ENCODE measurements at regions of chr11 and their contacts with region 1.

Region 1: GRCh38 chr11:85752890-85753581 is 57.9 kb downstream of the SYTL2 start:
- DNase-seq: peak; percentile 94
- H3K4me3 Mint-ChIP-seq: peak overlapping the region; percentile 57
- H3K27ac Mint-ChIP-seq: peak overlapping the region; percentile 97
- H3K4me1 Mint-ChIP-seq: peaks cover 95% of the 10 kb centered on the region
- H3K27me3 Mint-ChIP-seq: no peaks in the 10 kb centered on the region

Region 2: GRCh38 chr11:85394283-85394682 is 358.8 kb before region 1 on chr11:
- CTCF ChIA-PET with region 1: no interaction called
- intact Hi-C with region 1: no loop called
- DNase-seq: no peak
- H3K4me3 Mint-ChIP-seq: no peak overlapping the region
- H3K27ac Mint-ChIP-seq: no peak overlapping the region
- H3K4me1 Mint-ChIP-seq: no peaks in the 10 kb centered on the region
- H3K27me3 Mint-ChIP-seq: no peaks in the 10 kb centered on the region

Region 3: DNA sequence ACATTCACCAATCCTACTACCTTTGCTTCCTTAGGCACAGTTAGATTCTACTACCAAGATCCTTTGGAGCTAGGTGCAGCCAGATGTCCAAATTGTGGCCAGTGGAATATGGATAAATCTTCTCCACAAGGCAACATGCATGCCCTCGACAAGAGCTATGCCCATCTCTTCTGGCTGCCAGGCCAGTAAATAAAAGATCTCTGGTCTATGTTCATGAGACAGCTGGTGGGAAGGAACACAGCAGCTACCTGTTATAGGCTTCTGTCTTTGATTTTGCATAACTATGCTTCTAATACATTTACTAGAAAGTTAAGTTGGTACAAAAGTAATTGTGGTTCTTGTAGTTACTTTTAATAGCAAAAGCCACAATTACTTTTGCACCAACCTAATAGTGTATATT is 308.6 kb before region 1 on chr11:
- CTCF ChIA-PET with region 1: no interaction called
- intact Hi-C with region 1: no loop called
- DNase-seq: no peak
- H3K4me3 Mint-ChIP-seq: no peak overlapping the region
- H3K27ac Mint-ChIP-seq: no peak overlapping the region
- H3K4me1 Mint-ChIP-seq: no peaks in the 10 kb centered on the region
- H3K27me3 Mint-ChIP-seq: no peaks in the 10 kb centered on the region

Region 4: GRCh38 chr11:85627998-85628770 is 124.9 kb before region 1 on chr11 and contains the start of gene TMEM126B:
- CTCF ChIA-PET with region 1: no interaction called
- intact Hi-C with region 1: loop called (anchors 1 kb)
- DNase-seq: peak; percentile 98
- H3K4me3 Mint-ChIP-seq: peak within 1 kb of the TSS; percentile 99
- H3K27ac Mint-ChIP-seq: peak within 1 kb of the TSS; percentile 96
- H3K4me1 Mint-ChIP-seq: peaks cover 33% of the 10 kb centered on the region
- H3K27me3 Mint-ChIP-seq: no peaks in the 10 kb centered on the region
- total RNA-seq, gene TMEM126B: 72.6 to 79.0 TPM

Region 5: GRCh38 chr11:85718991-85719807 is 33.8 kb before region 1 on chr11:
- CTCF ChIA-PET with region 1: no interaction called
- intact Hi-C with region 1: loop called (anchors 2 kb)
- DNase-seq: no peak
- H3K4me3 Mint-ChIP-seq: no peak overlapping the region
- H3K27ac Mint-ChIP-seq: no peak overlapping the region
- H3K4me1 Mint-ChIP-seq: peaks cover 8% of the 10 kb centered on the region
- H3K27me3 Mint-ChIP-seq: no peaks in the 10 kb centered on the region

Region 6: DNA sequence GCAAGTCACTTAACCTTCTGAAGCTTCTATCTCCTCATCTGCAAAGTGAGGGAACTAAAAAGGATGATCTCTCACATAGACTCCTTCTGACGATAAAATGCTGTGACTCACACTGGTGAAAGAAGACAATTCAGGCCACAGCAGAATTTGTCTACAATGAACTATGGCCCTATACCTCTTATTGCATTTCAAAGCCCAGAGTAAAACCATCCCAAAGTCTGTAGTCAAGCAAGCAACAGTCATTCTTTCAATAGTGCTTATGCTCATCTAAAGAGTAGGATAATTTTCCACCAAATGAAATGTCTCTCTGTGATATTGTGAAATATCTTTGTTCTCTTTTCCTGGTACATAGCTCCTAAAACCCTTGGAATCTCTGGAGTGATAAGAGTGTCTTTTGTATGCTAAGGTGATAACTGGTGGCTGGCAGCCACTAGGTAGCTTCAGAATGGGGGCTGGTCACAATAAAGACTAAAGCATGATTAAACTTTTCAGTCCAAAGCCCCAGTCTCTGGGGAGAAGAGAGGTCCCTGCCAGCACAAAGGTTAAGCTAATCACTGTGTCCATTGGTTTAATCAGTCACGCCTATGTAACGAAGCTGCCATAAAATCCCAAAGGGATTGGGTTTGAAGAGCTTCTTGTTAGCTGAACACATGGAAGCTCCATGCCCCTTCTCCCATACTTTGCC is 27.1 kb after region 1 on chr11:
- CTCF ChIA-PET with region 1: no interaction called
- intact Hi-C with region 1: loop called (anchors 1 kb)
- DNase-seq: no peak
- H3K4me3 Mint-ChIP-seq: no peak overlapping the region
- H3K27ac Mint-ChIP-seq: no peak overlapping the region
- H3K4me1 Mint-ChIP-seq: peaks cover 25% of the 10 kb centered on the region
- H3K27me3 Mint-ChIP-seq: no peaks in the 10 kb centered on the region

Region 7: GRCh38 chr11:85815186-85815931 is 62.3 kb after region 1 on chr11:
- CTCF ChIA-PET with region 1: no interaction called
- intact Hi-C with region 1: no loop called
- DNase-seq: no peak
- H3K4me3 Mint-ChIP-seq: no peak overlapping the region
- H3K27ac Mint-ChIP-seq: no peak overlapping the region
- H3K4me1 Mint-ChIP-seq: peaks cover 8% of the 10 kb centered on the region
- H3K27me3 Mint-ChIP-seq: no peaks in the 10 kb centered on the region

Region 8: DNA sequence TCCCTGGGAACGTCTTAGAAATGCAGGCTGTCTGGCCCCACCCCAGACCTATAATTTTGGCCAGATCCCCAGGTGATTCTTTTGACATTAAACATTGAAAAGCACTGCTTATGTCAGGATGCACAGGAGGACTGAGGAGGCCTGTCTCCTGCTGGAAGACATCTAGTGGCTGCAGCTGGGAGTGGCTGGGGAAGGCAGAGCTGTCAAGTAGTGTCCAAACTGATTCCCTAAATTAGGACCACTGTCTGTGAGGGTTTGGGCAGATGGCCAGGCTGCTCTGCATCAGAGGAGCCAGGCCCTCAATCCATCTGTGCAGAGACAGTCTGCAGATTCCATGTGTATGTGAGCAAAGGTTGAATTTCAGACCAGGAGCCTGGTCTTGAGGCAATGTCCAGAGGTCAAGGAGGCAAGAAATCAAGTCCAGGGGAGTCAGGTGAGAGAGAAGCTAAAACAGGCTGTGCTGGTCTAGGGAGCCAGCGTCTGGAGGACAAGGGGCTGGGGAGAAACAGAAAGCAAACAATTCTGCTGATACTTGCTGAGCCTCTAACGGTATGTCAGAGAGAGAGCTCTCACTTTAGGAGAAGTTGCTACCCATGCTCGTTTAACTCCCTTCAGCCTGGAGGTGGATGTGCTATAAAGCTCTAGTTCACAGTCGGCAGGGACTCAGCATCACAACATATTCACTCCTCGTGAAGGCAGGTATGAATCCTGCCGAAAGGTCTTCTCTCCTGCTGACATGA is 73.2 kb after region 1 on chr11:
- CTCF ChIA-PET with region 1: no interaction called
- intact Hi-C with region 1: loop called (anchors 1 kb)
- DNase-seq: peak; percentile 51
- H3K4me3 Mint-ChIP-seq: peak overlapping the region; percentile 28
- H3K27ac Mint-ChIP-seq: peak overlapping the region; percentile 20
- H3K4me1 Mint-ChIP-seq: peaks cover 57% of the 10 kb centered on the region
- H3K27me3 Mint-ChIP-seq: no peaks in the 10 kb centered on the region

Region 9: GRCh38 chr11:86193297-86194095 is 440.5 kb after region 1 on chr11:
- CTCF ChIA-PET with region 1: no interaction called
- intact Hi-C with region 1: no loop called
- DNase-seq: peak; percentile 74
- H3K4me3 Mint-ChIP-seq: peak overlapping the region; percentile 52
- H3K27ac Mint-ChIP-seq: peak overlapping the region; percentile 73
- H3K4me1 Mint-ChIP-seq: peaks cover 19% of the 10 kb centered on the region
- H3K27me3 Mint-ChIP-seq: no peaks in the 10 kb centered on the region

Region 10: DNA sequence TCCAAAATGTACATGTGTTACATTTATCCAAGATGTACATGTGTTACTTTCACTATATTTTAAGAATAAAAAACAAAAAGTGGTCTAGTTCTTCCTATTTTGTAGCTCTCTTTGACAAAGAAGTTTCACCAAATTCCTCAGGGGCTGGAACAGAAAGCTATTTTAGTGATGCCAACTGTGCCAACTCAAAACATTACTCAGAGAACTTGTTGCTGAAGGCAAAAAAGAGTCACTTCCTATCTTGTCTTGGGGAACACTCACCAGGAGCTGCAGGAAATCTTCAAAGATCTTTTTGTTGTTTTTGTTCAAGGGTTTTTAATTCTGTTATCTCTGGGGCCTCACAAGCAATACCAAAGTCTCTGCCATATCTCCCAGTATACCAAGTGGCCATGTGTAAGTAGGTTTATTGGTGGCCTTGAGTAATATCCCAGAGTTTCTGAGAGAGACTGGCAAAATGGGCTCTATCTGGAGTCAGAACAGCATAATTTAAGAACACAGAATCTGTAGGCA is 477.9 kb after region 1 on chr11:
- CTCF ChIA-PET with region 1: no interaction called
- intact Hi-C with region 1: loop called (anchors 2 kb)
- DNase-seq: no peak
- H3K4me3 Mint-ChIP-seq: no peak overlapping the region
- H3K27ac Mint-ChIP-seq: peak overlapping the region; percentile 15
- H3K4me1 Mint-ChIP-seq: peaks cover 62% of the 10 kb centered on the region
- H3K27me3 Mint-ChIP-seq: no peaks in the 10 kb centered on the region

Region 11: DNA sequence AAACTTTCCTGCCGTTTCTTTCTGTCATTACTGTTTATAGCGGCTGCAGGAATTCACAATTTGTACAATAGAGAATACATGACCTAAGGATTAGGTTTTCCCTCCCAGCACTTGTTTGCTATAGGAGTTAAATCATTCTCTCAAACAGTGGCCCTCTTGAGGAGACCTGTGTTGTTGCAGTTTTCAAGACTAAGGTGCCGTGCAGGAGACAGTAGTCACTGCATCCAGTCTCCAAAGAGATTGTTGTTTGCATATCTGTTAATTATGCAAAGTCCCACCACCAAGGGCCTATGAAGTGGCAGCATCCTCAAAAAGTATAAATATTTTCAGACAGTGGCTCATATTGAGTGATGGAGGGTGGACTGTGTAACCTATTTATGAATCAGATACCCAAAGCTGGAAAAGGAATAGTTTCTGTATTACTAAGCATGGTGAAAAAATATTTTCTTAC is 1049.6 kb after region 1 on chr11:
- CTCF ChIA-PET with region 1: no interaction called
- intact Hi-C with region 1: loop called (anchors 2 kb)
- DNase-seq: peak; percentile 38
- H3K4me3 Mint-ChIP-seq: no peak overlapping the region
- H3K27ac Mint-ChIP-seq: no peak overlapping the region
- H3K4me1 Mint-ChIP-seq: peaks cover 53% of the 10 kb centered on the region
- H3K27me3 Mint-ChIP-seq: peaks cover 46% of the 10 kb centered on the region